Panc1 (cell line): ENCODE measurements at regions of chr3 and their contacts with region 1.

Region 1: GRCh38 chr3:195271116-195271858 is at the start of gene XXYLT1:
- DNase-seq: peak; percentile 52
- ATAC-seq: peak; percentile 93
- H3K4me3 ChIP-seq: peak within 1 kb of the TSS; percentile 76 to 91
- H3K27ac ChIP-seq: peak within 1 kb of the TSS; percentile 92
- H3K4me1 ChIP-seq: peaks cover 19% of the 10 kb centered on the region
- H3K27me3 ChIP-seq: no peaks in the 10 kb centered on the region
- CTCF ChIP-seq: peak; percentile 98
- total RNA-seq, gene XXYLT1: 26.0 TPM

Region 2: GRCh38 chr3:195178124-195178775 is 93.0 kb before region 1 on chr3:
- CTCF ChIA-PET with region 1: no interaction called
- POLR2A ChIA-PET with region 1: no interaction called
- in situ Hi-C with region 1: no loop called
- intact Hi-C with region 1: no loop called
- DNase-seq: no peak
- ATAC-seq: no peak
- H3K4me3 ChIP-seq: no peak overlapping the region
- H3K27ac ChIP-seq: no peak overlapping the region
- H3K4me1 ChIP-seq: peaks cover 13% of the 10 kb centered on the region
- H3K27me3 ChIP-seq: no peaks in the 10 kb centered on the region
- CTCF ChIP-seq: no peak

Region 3: DNA sequence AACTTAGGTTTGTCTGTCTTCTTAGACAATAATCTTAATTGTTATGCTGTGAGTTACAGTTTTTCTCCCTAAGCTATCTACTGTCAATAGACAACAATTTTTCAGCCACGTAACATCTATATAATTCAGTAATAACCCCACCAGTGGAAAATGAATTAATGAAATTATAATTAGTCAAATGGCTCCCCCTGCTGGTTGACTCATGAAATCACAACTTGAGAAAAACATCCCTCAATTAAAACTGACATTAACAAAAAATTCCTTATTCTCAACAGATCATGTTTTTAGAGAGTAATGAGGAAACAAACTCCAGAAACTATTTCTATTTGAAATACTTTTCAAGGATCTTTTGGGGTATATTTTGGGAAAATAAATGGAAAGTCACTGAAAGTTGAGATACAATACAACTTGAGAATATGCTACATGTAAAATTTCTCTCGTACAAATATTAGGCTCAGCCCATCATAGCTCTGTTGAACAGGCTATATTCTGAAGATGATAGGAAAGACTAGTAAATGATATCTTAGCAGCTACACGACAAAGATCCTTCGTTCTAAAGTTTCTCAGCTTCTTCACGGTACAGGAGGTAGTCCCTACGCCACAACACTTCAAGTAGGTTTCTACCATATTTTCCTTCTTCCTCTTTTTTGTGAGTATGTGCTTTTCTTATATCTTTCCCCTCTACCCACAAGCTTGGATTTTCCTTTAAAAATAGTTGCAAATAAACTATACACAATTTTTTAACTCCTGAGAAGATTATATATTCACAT is 251.2 kb after region 1 on chr3:
- CTCF ChIA-PET with region 1: interaction called, 5 read pairs
- POLR2A ChIA-PET with region 1: no interaction called
- in situ Hi-C with region 1: no loop called
- intact Hi-C with region 1: loop called (anchors 1 kb)
- DNase-seq: no peak
- ATAC-seq: no peak
- H3K4me3 ChIP-seq: no peak overlapping the region
- H3K27ac ChIP-seq: no peak overlapping the region
- H3K4me1 ChIP-seq: no peaks in the 10 kb centered on the region
- H3K27me3 ChIP-seq: no peaks in the 10 kb centered on the region
- CTCF ChIP-seq: peak; percentile 76; the same call in 1 of the 2 replicates